GM12878 (cell line): ENCODE measurements at regions of chr9 and their contacts with region 1.

Region 1: GRCh38 chr9:136790927-136791641 is at the start of gene TMEM141:
- DNase-seq: peak; percentile 92
- ATAC-seq: peak; percentile 94
- H3K4me3 ChIP-seq: peak within 1 kb of the TSS; percentile 77
- H3K27ac ChIP-seq: peak within 1 kb of the TSS; percentile 82
- H3K4me1 ChIP-seq: peaks cover 10% of the 10 kb centered on the region
- H3K27me3 ChIP-seq: no peaks in the 10 kb centered on the region
- CTCF ChIP-seq: no peak
- EP300 ChIP-seq: no peak
- POLR2A ChIP-seq: peak; percentile 83
- RAD21 ChIP-seq: no peak
- polyA plus RNA-seq, gene TMEM141: 7.8 to 13.3 TPM

Region 2: GRCh38 chr9:136764301-136764948 is 26.7 kb before region 1 on chr9 and contains the start of gene LCN15:
- CTCF ChIA-PET with region 1: interaction called, 163 read pairs
- POLR2A ChIA-PET with region 1: no interaction called
- RAD21 ChIA-PET with region 1: interaction called, 6 read pairs
- SMC1A ChIA-PET with region 1: interaction called, 23 read pairs
- in situ Hi-C with region 1: no loop called
- intact Hi-C with region 1: no loop called
- DNase-seq: no peak
- ATAC-seq: no peak
- H3K4me3 ChIP-seq: no peak within 1 kb of the TSS; the same call in 1 of the 2 replicates
- H3K27ac ChIP-seq: peak within 1 kb of the TSS; percentile 79
- H3K4me1 ChIP-seq: peaks cover 26% of the 10 kb centered on the region
- H3K27me3 ChIP-seq: no peaks in the 10 kb centered on the region; a peak in 1 of 4 replicates
- CTCF ChIP-seq: no peak
- EP300 ChIP-seq: no peak
- POLR2A ChIP-seq: no peak
- RAD21 ChIP-seq: no peak
- polyA plus RNA-seq, gene LCN15: not detected

Region 3: DNA sequence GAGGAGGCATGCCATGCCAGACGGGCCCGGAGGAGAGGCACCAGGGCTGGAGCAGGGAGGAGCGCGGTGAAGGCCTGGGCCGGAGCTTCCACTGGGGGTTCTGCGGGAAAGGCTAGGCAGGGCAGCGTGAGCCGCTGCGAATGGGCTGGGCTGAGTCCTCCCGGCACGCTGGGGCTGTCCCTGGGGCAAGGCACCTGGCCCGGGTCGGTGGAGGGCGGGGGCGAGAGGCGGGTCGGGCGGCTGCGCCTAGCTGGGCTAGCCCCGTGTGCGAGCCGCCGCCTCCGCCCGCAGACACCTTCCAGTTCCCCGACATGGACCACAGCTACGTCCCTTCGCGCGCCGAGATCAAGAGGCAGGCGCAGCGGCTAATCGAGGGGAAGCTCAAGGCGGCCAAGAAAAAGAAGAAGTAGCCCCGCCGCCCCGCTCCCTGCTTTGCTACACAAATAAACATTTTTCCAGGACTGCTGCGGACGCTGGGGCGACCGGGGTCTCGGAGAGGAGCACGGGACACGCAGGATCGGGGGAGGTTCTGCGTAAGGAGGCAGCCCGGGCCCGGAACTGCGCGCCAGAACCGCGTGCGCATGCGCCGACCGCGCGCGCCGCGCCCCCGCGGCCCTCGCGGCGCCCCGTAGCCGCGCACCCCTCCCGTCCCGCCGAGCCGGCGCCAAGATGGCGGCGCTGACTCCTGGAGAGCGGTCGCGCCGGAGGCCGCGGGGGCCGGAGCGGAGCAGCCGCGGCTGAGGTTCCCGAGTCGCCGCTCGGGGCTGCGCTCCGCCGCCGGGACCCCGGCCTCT is 16.4 kb after region 1 on chr9 and contains the start of gene RABL6:
- CTCF ChIA-PET with region 1: interaction called, 13 read pairs
- POLR2A ChIA-PET with region 1: interaction called, 4 read pairs
- RAD21 ChIA-PET with region 1: interaction called, 3 read pairs
- SMC1A ChIA-PET with region 1: no interaction called
- in situ Hi-C with region 1: no loop called
- intact Hi-C with region 1: no loop called
- DNase-seq: no peak
- ATAC-seq: peak; percentile 87
- H3K4me3 ChIP-seq: peak within 1 kb of the TSS; percentile 90
- H3K27ac ChIP-seq: peak within 1 kb of the TSS; percentile 80
- H3K4me1 ChIP-seq: peaks cover 7% of the 10 kb centered on the region
- H3K27me3 ChIP-seq: no peaks in the 10 kb centered on the region
- CTCF ChIP-seq: no peak
- EP300 ChIP-seq: no peak
- POLR2A ChIP-seq: peak; percentile 78
- RAD21 ChIP-seq: no peak
- polyA plus RNA-seq, gene RABL6: 1.4 to 5.4 TPM

Region 4: GRCh38 chr9:136944519-136945279 is 153.6 kb after region 1 on chr9 and contains the starts of genes C8G and FBXW5:
- CTCF ChIA-PET with region 1: interaction called, 11 read pairs
- POLR2A ChIA-PET with region 1: no interaction called
- RAD21 ChIA-PET with region 1: interaction called, 3 read pairs
- SMC1A ChIA-PET with region 1: interaction called, 5 read pairs
- in situ Hi-C with region 1: no loop called
- intact Hi-C with region 1: loop called (anchors 10 kb)
- DNase-seq: peak; percentile 72
- ATAC-seq: peak; percentile 78
- H3K4me3 ChIP-seq: peak within 1 kb of the TSS; percentile 98
- H3K27ac ChIP-seq: peak within 1 kb of the TSS; percentile 91
- H3K4me1 ChIP-seq: peaks cover 4% of the 10 kb centered on the region
- H3K27me3 ChIP-seq: no peaks in the 10 kb centered on the region
- CTCF ChIP-seq: peak; percentile 95 to 98 (median 98); a peak in 5 of 6 replicates
- EP300 ChIP-seq: 0 out of 4 replicates have a peak, but pooled peaks of 1 of the 2 experiments have one; percentile 35
- POLR2A ChIP-seq: no peak
- RAD21 ChIP-seq: peak; percentile 35; the same call in 1 of the 2 replicates
- polyA plus RNA-seq, gene C8G: not detected
- polyA plus RNA-seq, gene FBXW5: 0.21 to 1.4 TPM

Region 5: DNA sequence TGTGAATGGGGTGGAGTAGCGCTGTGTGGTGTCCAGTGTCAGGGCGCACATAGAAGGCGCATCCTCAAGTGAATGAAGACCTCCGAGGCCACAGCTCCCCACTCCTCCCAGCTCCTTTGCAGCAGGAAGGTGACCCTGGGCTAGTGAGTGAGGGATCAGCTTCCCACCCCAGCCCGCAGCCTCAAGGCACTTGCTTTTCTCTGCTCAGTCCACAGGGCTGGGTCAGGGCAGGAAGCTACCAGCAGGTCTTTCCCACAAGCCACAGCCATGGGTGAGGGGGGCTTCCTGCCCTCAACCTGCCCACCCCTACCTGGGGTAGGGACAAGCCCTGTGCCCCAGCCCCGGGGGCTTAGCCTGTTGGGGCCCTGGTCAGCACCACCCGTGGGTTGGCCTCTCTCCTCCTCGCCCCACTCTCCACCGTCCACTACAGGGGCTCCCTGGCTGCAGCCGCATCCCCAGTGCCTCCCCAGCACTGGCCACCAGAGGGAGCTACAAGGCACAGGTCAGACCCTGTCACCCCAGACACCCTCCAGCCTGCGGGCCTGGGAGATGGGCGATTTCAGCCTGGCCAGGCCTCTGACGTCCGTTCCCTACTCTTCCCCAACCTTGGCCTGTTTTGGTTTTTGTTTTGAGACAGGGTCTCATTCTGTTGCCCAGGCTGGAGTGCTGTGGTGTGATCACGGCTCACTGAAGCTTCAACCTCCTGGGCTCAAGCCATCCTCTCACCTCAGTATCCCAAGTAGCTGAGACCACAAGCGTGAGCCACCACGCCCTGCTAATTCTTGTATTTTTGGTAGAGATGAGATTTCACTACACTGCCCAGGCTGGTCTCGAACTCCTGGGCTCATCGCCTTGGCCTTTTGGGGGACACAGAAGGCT is 238.2 kb after region 1 on chr9:
- CTCF ChIA-PET with region 1: interaction called, 61 read pairs
- POLR2A ChIA-PET with region 1: interaction called, 4 read pairs
- RAD21 ChIA-PET with region 1: interaction called, 28 read pairs
- SMC1A ChIA-PET with region 1: interaction called, 20 read pairs
- in situ Hi-C with region 1: no loop called
- intact Hi-C with region 1: no loop called
- DNase-seq: no peak
- ATAC-seq: peak; percentile 86
- H3K4me3 ChIP-seq: no peak overlapping the region
- H3K27ac ChIP-seq: no peak overlapping the region
- H3K4me1 ChIP-seq: peaks cover 41% of the 10 kb centered on the region
- H3K27me3 ChIP-seq: peaks cover 0 to 2% of the 10 kb centered on the region in 2 experiments; a peak in 2 of 4 replicates
- CTCF ChIP-seq: peak; percentile 84 to 97 (median 93)
- EP300 ChIP-seq: no peak
- POLR2A ChIP-seq: no peak
- RAD21 ChIP-seq: peak; percentile 34; the same call in 1 of the 2 replicates

Region 6: DNA sequence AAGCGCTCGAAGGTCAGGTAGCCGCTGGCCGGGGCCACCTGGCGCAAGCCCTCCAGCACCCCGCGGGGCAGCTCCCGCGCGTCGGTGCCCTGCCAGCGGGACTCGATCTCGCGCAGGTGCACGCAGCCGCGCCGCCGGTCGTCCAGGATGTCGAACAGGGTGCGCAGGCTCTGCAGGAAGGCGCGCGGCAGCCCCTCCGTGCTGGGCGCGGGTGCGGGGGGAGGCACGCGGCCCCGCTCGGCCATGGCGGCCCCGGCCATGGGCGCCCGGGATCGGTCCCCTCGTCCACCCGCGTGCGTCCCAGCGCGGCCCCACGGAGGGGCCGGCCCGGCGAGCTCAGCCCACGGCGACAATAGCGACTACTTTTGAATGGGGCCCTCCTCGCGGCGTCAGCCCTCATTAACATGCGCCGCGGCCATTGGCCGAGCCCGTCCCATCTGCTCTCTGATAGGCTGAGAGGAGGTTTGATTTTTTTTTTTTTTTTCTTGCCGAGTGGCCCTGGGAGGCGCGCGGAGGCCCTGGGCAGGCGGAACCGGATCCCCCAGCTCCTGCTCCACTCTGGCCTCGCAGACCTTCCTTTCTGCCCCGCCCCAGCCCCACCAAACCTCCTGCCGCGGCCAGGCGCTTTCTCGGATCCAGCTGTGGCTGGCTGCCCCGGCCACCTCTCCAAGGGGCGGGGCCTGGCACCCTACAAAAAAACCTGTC is 279.3 kb after region 1 on chr9 and contains the start of gene SAPCD2:
- CTCF ChIA-PET with region 1: interaction called, 30 read pairs
- POLR2A ChIA-PET with region 1: no interaction called
- RAD21 ChIA-PET with region 1: interaction called, 4 read pairs
- SMC1A ChIA-PET with region 1: no interaction called
- in situ Hi-C with region 1: no loop called
- intact Hi-C with region 1: no loop called
- DNase-seq: no peak
- ATAC-seq: peak; percentile 88
- H3K4me3 ChIP-seq: peak within 1 kb of the TSS; percentile 80
- H3K27ac ChIP-seq: peak within 1 kb of the TSS; percentile 70
- H3K4me1 ChIP-seq: peaks cover 33% of the 10 kb centered on the region
- H3K27me3 ChIP-seq: no peaks in the 10 kb centered on the region
- CTCF ChIP-seq: no peak
- EP300 ChIP-seq: no peak
- POLR2A ChIP-seq: peak; percentile 69
- RAD21 ChIP-seq: no peak
- polyA plus RNA-seq, gene SAPCD2: 1.6 to 2.0 TPM